Right ventricle myocardium superior (tissue), 1 donor: ENCODE measurements at regions of chr6 and their contacts with region 1.

Region 1: DNA sequence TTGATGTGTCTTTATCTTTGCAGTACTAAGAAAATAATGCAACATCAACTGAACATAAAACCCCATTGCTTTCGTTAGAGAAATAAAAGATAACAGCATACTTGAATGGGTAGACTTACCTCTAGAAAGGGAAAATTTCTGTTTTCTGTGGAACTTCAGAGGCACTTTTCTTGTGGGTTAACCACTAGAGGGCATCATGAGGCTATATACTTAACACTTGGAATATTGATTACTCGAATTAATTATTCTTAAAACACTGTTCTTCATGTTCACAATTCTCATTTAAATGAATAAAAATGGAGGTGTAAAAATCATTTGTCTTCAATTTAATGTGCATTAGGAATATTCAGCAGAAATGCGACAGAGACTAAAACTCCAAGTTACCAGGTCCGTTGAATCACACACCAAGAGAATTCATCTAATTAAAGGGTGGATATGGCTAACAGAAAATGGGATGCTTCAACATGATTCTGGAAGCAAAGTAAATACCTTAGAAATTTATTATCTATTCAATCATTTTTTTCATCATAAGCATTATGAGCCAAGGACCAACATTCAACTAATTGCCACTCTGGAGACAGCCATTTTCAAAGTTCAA is 330.8 kb upstream of the PREP start:
- DNase-seq: no peak
- ATAC-seq: no peak

Region 2: GRCh38 chr6:106300944-106301343 is 567.3 kb after region 1 on chr6:
- intact Hi-C with region 1: loop called (anchors 5 kb)
- DNase-seq: no peak
- ATAC-seq: peak; percentile 56